Activated CD8-positive, alpha-beta T cell treated with anti-CD3 and anti-CD28 coated beads for 36 hours (primary cell): ENCODE measurements at regions of chr6 and their contacts with region 1.

Region 1: DNA sequence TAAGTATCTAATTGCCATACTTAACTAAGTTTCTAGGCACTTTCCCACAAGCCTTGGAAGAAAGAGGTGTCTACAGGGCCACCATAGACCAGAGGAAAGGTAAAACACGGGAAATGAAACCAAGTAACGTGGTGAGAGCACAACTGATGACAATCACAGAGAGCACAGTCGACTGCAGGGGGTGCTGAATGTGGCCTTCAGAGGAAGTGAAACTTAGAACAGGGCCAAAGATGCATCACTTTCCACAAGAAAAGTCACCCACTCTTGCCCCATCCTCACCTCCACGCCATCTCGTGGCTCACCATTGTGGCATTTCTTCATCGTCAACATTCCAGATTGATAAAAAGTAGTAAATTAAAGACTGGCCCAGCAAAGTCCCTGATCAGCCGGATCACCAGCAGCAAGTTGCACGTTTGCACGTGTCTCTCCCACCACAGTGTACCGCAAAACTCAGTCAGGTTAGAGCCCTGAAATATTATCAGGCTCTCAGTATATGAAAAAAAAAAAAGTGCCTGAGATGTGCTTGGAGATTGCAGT is 31.4 kb downstream of the HIVEP2 start:
- DNase-seq: peak; percentile 88
- ATAC-seq: peak; percentile 88
- H3K4me3 Mint-ChIP-seq: peak overlapping the region; percentile 70
- H3K27ac Mint-ChIP-seq: peak overlapping the region; percentile 98
- H3K4me1 Mint-ChIP-seq: peaks cover 82% of the 10 kb centered on the region
- H3K27me3 Mint-ChIP-seq: no peaks in the 10 kb centered on the region
- CTCF ChIP-seq: no peak

Region 2: GRCh38 chr6:142850679-142851423 is 62.7 kb before region 1 on chr6:
- CTCF ChIA-PET with region 1: interaction called, 3 read pairs
- POLR2A ChIA-PET with region 1: interaction called, 3 read pairs
- intact Hi-C with region 1: loop called (anchors 2 kb)
- DNase-seq: peak; percentile 68
- ATAC-seq: peak; percentile 64
- H3K4me3 Mint-ChIP-seq: peak overlapping the region; percentile 40
- H3K27ac Mint-ChIP-seq: peak overlapping the region; percentile 93
- H3K4me1 Mint-ChIP-seq: peaks cover 97% of the 10 kb centered on the region
- H3K27me3 Mint-ChIP-seq: no peaks in the 10 kb centered on the region
- CTCF ChIP-seq: no peak

Region 3: DNA sequence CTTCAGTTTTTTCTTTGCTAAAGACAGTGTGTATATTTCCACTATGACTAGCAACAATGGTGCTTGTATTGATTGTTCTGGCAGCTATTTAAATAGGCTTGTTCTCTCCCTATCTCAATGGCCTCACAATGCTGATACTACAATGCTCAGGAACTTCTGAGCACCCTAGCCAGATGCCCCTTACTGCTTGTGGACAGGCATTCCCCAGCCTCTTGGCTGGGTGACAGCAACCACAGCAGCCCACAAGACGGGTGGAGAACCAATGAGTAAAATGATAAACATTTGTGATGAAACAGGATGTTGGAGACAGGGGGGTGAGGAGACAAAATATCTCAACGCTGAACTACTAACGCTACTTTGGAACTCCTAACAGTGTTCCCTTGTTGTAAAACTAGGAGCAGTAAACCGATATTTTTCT is 10.9 kb before region 1 on chr6:
- CTCF ChIA-PET with region 1: interaction called, 5 read pairs
- POLR2A ChIA-PET with region 1: interaction called, 19 read pairs
- intact Hi-C with region 1: no loop called
- DNase-seq: peak; percentile 90
- ATAC-seq: peak; percentile 61
- H3K4me3 Mint-ChIP-seq: peak overlapping the region; percentile 50
- H3K27ac Mint-ChIP-seq: peak overlapping the region; percentile 86
- H3K4me1 Mint-ChIP-seq: peaks cover 64% of the 10 kb centered on the region
- H3K27me3 Mint-ChIP-seq: no peaks in the 10 kb centered on the region
- CTCF ChIP-seq: no peak

Region 4: GRCh38 chr6:142926494-142927270 is 13.1 kb after region 1 on chr6:
- CTCF ChIA-PET with region 1: interaction called, 4 read pairs
- POLR2A ChIA-PET with region 1: interaction called, 16 read pairs
- intact Hi-C with region 1: loop called (anchors 2 kb)
- DNase-seq: peak; percentile 90
- ATAC-seq: peak; percentile 85
- H3K4me3 Mint-ChIP-seq: peak overlapping the region; percentile 96
- H3K27ac Mint-ChIP-seq: peak overlapping the region; percentile 97
- H3K4me1 Mint-ChIP-seq: peaks cover 55% of the 10 kb centered on the region
- H3K27me3 Mint-ChIP-seq: no peaks in the 10 kb centered on the region
- CTCF ChIP-seq: no peak